Right ventricle myocardium inferior (tissue), 1 donor: ENCODE measurements at regions of chr2 and their contacts with region 1.

Region 1: DNA sequence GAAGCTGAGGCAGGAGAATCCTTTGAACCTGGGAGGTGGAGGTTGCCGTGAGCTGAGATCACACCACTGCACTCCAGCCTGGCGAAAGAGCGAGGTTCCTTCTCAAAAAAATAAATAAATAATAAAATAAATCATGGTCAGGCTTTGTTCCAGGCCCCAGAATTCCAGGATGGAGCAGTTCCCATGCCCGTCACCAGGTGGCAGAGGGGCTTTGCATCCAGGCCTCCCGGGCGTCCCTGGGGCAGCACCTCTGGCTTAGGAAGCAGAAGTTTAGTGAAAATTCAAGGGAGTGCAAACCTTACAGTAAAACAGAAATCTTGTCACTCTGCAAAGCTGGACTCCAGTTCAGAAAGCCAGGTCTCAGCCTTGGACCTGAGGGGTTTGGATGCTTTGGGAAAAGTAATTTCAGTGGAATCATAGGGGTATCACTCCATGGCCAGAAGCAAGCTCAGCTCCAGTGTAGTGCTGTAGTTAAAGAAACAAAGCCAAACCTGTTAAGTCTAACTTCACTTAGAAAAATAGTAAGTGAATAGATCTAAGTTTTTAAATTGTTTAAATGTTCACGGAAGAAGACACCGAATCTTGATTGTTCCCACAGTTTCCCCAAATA is 512.7 kb downstream of the CMPK2 start:
- DNase-seq: no peak
- ATAC-seq: no peak

Region 2: GRCh38 chr2:6773007-6773693 is 420.1 kb after region 1 on chr2:
- intact Hi-C with region 1: loop called (anchors 1 kb)
- DNase-seq: peak; percentile 78
- ATAC-seq: peak; percentile 67

Region 3: GRCh38 chr2:6826081-6826913 is 473.3 kb after region 1 on chr2:
- intact Hi-C with region 1: loop called (anchors 5 kb)
- DNase-seq: no peak
- ATAC-seq: no peak